Naive thymus-derived CD4-positive, alpha-beta T cell (primary cell): ENCODE measurements at regions of chr11 and their contacts with region 1.

Region 1: DNA sequence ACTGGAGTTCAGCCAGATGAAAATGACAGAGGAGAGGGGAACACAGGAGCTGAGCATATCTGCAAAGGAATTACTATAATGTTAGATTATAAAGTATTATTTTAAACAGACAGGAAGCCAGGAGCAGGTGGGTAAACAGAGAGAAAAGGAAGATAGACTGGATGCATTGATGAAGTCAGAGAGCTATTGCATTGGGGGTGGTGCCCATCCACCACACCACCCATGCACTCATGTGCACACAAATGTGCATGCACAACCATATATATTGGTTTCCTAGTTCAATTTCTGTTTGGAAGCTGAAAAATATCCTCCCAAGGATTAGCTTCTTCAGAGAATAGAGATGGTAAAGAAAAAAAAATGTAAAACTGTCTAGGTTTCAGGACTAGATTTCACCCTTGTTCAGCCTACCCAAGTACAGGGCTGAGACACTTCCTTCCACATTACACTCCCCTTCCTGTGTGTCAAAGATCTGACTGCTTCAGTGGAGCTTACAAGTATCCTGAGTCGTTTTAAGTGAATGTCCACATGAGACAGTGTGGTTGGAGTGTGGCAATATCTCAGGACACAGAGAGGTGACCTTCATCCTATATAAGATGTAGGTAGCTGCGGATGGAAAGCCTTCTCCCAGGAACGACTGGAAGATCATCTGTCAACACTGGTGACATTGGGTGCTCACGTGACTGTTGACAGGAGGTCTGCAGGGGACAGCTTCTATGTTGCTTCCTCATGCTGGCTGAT is 12.2 kb upstream of the SMPD1 start:
- DNase-seq: peak in 5 of 9 donors; percentile 20 to 52 (median 45)
- ATAC-seq: peak; percentile 79
- H3K4me3 ChIP-seq: peak overlapping the region; percentile 17
- H3K4me3 Mint-ChIP-seq: peak overlapping the region; percentile 48 to 85 (median 72)
- H3K27ac ChIP-seq: peak overlapping the region; percentile 44
- H3K27ac Mint-ChIP-seq: peak overlapping the region; percentile 69 to 93 (median 85)
- H3K4me1 ChIP-seq: peaks cover 0 to 23% of the 10 kb centered on the region in 2 donors
- H3K4me1 Mint-ChIP-seq: peaks cover 14 to 44% (median 37%) of the 10 kb centered on the region in 7 donors
- H3K27me3 ChIP-seq: no peaks in the 10 kb centered on the region
- H3K27me3 Mint-ChIP-seq: no peaks in the 10 kb centered on the region

Region 2: DNA sequence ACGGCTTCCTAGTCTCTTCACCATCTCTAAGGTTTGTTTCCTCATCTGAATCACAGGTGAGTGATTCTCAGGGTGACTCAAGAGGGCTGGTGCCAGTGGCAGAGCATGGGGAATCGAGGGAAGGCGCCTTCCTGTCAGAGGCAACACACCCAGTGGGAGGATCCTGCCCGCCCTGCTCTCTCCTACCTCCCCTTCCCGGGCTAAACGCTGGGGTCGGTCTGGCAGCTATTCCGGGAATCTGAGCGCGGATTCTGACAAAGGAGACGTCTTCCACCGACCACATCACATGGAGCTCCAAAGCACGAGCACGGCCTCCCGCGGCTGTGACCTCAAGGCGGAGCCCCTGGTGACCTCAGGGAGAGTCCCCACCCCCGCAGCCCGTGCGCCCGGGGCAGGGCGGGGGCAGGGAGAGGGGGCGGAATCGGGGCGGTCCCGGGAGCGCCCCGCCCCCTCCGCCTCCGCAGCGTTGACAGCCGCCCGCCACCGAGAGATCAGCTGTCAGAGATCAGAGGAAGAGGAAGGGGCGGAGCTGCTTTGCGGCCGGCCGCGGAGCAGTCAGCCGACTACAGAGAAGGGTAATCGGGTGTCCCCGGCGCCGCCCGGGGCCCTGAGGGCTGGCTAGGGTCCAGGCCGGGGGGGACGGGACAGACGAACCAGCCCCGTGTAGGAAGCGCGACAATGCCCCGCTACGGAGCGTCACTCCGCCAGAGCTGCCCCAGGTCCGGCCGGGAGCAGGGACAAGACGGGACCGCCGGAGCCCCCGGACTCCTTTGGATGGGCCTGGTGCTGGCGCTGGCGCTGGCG is 12.1 kb after region 1 on chr11 and contains the start of gene SMPD1:
- CTCF ChIA-PET with region 1: interaction called, 48 read pairs
- POLR2A ChIA-PET with region 1: interaction called, 50 read pairs
- intact Hi-C with region 1: loop called (anchors 1 kb)
- DNase-seq: peak; percentile 85 to 94 (median 92)
- ATAC-seq: peak; percentile 97
- H3K4me3 ChIP-seq: peak within 1 kb of the TSS; percentile 94
- H3K4me3 Mint-ChIP-seq: peak within 1 kb of the TSS; percentile 91 to 98 (median 94)
- H3K27ac ChIP-seq: peak within 1 kb of the TSS; percentile 95
- H3K27ac Mint-ChIP-seq: peak within 1 kb of the TSS; percentile 93 to 100 (median 99)
- H3K4me1 ChIP-seq: peaks cover 25 to 53% of the 10 kb centered on the region in 2 donors
- H3K4me1 Mint-ChIP-seq: peaks cover 31 to 74% (median 66%) of the 10 kb centered on the region in 7 donors
- H3K27me3 ChIP-seq: no peaks in the 10 kb centered on the region
- H3K27me3 Mint-ChIP-seq: peaks cover 0 to 13% (median 0%) of the 10 kb centered on the region in 5 donors
- total RNA-seq, gene SMPD1: 43.0 to 70.9 (median 55.4) TPM

Region 3: GRCh38 chr11:6419009-6419631 is 41.0 kb after region 1 on chr11 and contains the start of gene APBB1:
- CTCF ChIA-PET with region 1: interaction called, 30 read pairs
- POLR2A ChIA-PET with region 1: interaction called, 37 read pairs
- intact Hi-C with region 1: loop called (anchors 1 to 2 kb)
- DNase-seq: peak; percentile 71 to 87 (median 81)
- ATAC-seq: peak; percentile 89
- H3K4me3 ChIP-seq: peak within 1 kb of the TSS; percentile 79
- H3K4me3 Mint-ChIP-seq: peak within 1 kb of the TSS in 7 of 10 donors; percentile 78 to 92 (median 85)
- H3K27ac ChIP-seq: peak within 1 kb of the TSS; percentile 92
- H3K27ac Mint-ChIP-seq: peak within 1 kb of the TSS; percentile 47 to 92 (median 89)
- H3K4me1 ChIP-seq: peaks cover 27 to 46% of the 10 kb centered on the region in 2 donors
- H3K4me1 Mint-ChIP-seq: peaks cover 2 to 18% (median 14%) of the 10 kb centered on the region in 7 donors
- H3K27me3 ChIP-seq: no peaks in the 10 kb centered on the region
- H3K27me3 Mint-ChIP-seq: peaks cover 0 to 36% (median 11%) of the 10 kb centered on the region in 5 donors
- total RNA-seq, gene APBB1: 46.9 to 188 (median 154) TPM

Region 4: GRCh38 chr11:6455070-6455469 is 77.0 kb after region 1 on chr11:
- CTCF ChIA-PET with region 1: interaction called, 573 read pairs
- POLR2A ChIA-PET with region 1: no interaction called
- intact Hi-C with region 1: no loop called
- DNase-seq: no peak
- ATAC-seq: no peak
- H3K4me3 ChIP-seq: no peak overlapping the region
- H3K4me3 Mint-ChIP-seq: no peak overlapping the region
- H3K27ac ChIP-seq: no peak overlapping the region
- H3K27ac Mint-ChIP-seq: no peak overlapping the region
- H3K4me1 ChIP-seq: no peaks in the 10 kb centered on the region
- H3K4me1 Mint-ChIP-seq: no peaks in the 10 kb centered on the region
- H3K27me3 ChIP-seq: no peaks in the 10 kb centered on the region
- H3K27me3 Mint-ChIP-seq: no peaks in the 10 kb centered on the region

Region 5: DNA sequence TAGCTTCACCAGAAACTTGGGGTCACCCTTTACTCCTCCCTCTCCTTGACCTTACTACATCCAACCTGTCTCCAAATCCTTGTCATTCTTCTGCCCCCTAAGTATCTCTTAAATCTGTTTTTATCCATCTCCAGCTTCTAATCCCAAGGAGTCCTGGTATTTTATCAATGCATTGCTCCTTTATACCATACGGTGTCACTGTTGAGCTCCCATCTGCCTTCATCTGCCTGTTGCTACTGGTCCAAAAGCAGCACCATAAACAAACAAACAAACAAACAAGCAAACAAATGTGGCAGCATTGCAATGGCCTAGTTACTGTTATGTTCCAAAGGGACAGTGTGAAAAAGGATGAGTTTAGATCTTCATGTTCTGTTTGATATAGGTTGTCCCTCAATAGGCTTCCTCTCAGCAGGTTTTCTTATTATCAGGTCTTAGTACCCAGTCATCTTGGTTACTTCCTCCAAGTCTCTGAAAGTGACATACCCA is 153.2 kb after region 1 on chr11:
- CTCF ChIA-PET with region 1: interaction called, 15 read pairs
- POLR2A ChIA-PET with region 1: interaction called, 3 read pairs
- intact Hi-C with region 1: no loop called
- DNase-seq: peak in 7 of 9 donors; percentile 7 to 51 (median 39)
- ATAC-seq: peak; percentile 83
- H3K4me3 ChIP-seq: no peak overlapping the region
- H3K4me3 Mint-ChIP-seq: no peak overlapping the region
- H3K27ac ChIP-seq: no peak overlapping the region
- H3K27ac Mint-ChIP-seq: no peak overlapping the region
- H3K4me1 ChIP-seq: peaks cover 4 to 5% of the 10 kb centered on the region in 2 donors
- H3K4me1 Mint-ChIP-seq: peaks cover 5 to 14% (median 11%) of the 10 kb centered on the region in 7 donors
- H3K27me3 ChIP-seq: no peaks in the 10 kb centered on the region
- H3K27me3 Mint-ChIP-seq: no peaks in the 10 kb centered on the region

Region 6: GRCh38 chr11:6655020-6655789 is 277.1 kb after region 1 on chr11:
- CTCF ChIA-PET with region 1: no interaction called
- POLR2A ChIA-PET with region 1: no interaction called
- intact Hi-C with region 1: no loop called
- DNase-seq: peak in 7 of 9 donors; percentile 15 to 50 (median 34)
- ATAC-seq: peak; percentile 60
- H3K4me3 ChIP-seq: peak overlapping the region; percentile 52
- H3K4me3 Mint-ChIP-seq: no peak overlapping the region
- H3K27ac ChIP-seq: peak overlapping the region; percentile 66
- H3K27ac Mint-ChIP-seq: no peak overlapping the region
- H3K4me1 ChIP-seq: peaks cover 0 to 26% of the 10 kb centered on the region in 2 donors
- H3K4me1 Mint-ChIP-seq: peaks cover 5 to 11% (median 7%) of the 10 kb centered on the region in 7 donors
- H3K27me3 ChIP-seq: no peaks in the 10 kb centered on the region
- H3K27me3 Mint-ChIP-seq: peaks cover 0 to 16% (median 0%) of the 10 kb centered on the region in 5 donors

Region 7: DNA sequence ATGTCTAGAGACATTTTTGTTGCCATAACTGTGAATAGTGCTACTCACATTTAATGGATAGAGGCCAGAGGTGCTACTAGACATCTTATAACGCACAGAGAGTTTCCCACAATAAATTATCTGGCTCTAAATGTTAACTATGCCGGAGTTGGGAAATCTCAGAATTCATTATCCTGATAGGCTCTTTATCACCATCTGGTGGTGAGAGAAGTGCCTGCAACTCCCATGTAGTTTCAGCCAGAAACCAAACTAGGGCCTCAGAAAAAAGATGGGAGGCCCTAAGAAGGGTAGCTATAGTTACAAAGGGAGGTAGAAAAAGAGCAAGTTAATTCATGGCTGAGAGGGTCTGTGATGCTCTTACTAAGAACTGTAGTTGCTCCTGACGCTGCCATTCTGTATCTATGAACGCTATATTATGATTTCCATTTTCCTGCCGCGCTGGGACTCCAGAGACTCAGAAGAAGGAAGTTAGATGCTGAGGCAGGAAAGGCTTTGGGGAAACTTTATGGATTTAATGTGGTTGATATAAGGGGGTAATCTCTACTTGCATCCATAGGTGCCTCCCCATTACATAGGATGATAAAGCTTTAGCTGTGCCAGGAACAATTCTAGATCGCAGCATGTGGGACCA is 327.9 kb after region 1 on chr11:
- CTCF ChIA-PET with region 1: interaction called, 5 read pairs
- POLR2A ChIA-PET with region 1: interaction called, 4 read pairs
- intact Hi-C with region 1: loop called (anchors 1 kb)
- DNase-seq: peak in 8 of 9 donors; percentile 20 to 49 (median 38)
- ATAC-seq: peak; percentile 79
- H3K4me3 ChIP-seq: no peak overlapping the region
- H3K4me3 Mint-ChIP-seq: no peak overlapping the region
- H3K27ac ChIP-seq: peak overlapping the region; percentile 28
- H3K27ac Mint-ChIP-seq: peak overlapping the region in 8 of 9 donors; percentile 36 to 87 (median 76)
- H3K4me1 ChIP-seq: no peaks in the 10 kb centered on the region
- H3K4me1 Mint-ChIP-seq: peaks cover 11 to 39% (median 17%) of the 10 kb centered on the region in 7 donors
- H3K27me3 ChIP-seq: no peaks in the 10 kb centered on the region
- H3K27me3 Mint-ChIP-seq: no peaks in the 10 kb centered on the region